ENCODE measurements at regions of chr12 and their contacts with region 1.

Region 1: GRCh38 chr12:89019408-89020120 is 332.7 kb downstream of the DUSP6 start:
- DNase-seq: peak; percentile 81
- H3K4me3 ChIP-seq: peak overlapping the region; percentile 18 to 49 (median 36)
- H3K27ac ChIP-seq: peak overlapping the region; percentile 57
- H3K4me1 ChIP-seq: peaks cover 16% of the 10 kb centered on the region
- H3K27me3 ChIP-seq: no peaks in the 10 kb centered on the region
- CTCF ChIP-seq: peak; percentile 92 to 93

Region 2: DNA sequence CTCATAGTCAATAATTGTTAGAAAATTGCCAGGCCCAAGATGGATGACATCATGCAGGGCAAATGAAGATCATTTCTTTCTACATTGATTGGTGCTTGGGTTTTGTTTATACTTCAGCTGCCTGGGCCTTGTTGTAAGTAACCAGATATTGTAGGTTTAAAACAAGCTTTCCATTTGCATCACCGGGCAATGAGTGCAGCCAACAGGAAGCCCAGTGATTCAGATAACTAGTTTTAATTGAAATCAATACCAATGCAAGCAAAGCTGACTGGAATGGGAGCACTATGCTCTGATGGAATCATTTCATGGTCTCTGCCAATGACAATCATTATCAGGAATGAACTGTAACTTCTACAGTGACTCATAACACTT is 53.4 kb after region 1 on chr12:
- CTCF ChIA-PET with region 1: no interaction called
- dilution Hi-C with region 1: no loop called
- in situ Hi-C with region 1: no loop called
- intact Hi-C with region 1: no loop called
- DNase-seq: no peak
- H3K4me3 ChIP-seq: no peak overlapping the region
- H3K27ac ChIP-seq: no peak overlapping the region
- H3K4me1 ChIP-seq: peaks cover 14% of the 10 kb centered on the region
- H3K27me3 ChIP-seq: no peaks in the 10 kb centered on the region
- CTCF ChIP-seq: no peak

Region 3: GRCh38 chr12:89345830-89346740 is 326.5 kb after region 1 on chr12:
- CTCF ChIA-PET with region 1: no interaction called
- dilution Hi-C with region 1: no loop called
- in situ Hi-C with region 1: no loop called
- intact Hi-C with region 1: loop called (anchors 1 kb)
- DNase-seq: peak; percentile 82
- H3K4me3 ChIP-seq: no peak overlapping the region
- H3K27ac ChIP-seq: peak overlapping the region; percentile 19
- H3K4me1 ChIP-seq: peaks cover 17% of the 10 kb centered on the region
- H3K27me3 ChIP-seq: no peaks in the 10 kb centered on the region
- CTCF ChIP-seq: no peak

Region 4: GRCh38 chr12:89451841-89452251 is 432.3 kb after region 1 on chr12:
- CTCF ChIA-PET with region 1: no interaction called
- dilution Hi-C with region 1: no loop called
- in situ Hi-C with region 1: loop called in 1 of 2 experiments (anchors 10 kb)
- intact Hi-C with region 1: no loop called
- DNase-seq: peak; percentile 74
- H3K4me3 ChIP-seq: no peak overlapping the region
- H3K27ac ChIP-seq: peak overlapping the region; percentile 85
- H3K4me1 ChIP-seq: peaks cover 30% of the 10 kb centered on the region
- H3K27me3 ChIP-seq: no peaks in the 10 kb centered on the region
- CTCF ChIP-seq: no peak

Region 5: GRCh38 chr12:89529738-89530137 is 510.2 kb after region 1 on chr12:
- CTCF ChIA-PET with region 1: interaction called, 8 read pairs
- dilution Hi-C with region 1: no loop called
- in situ Hi-C with region 1: loop called (anchors 5 kb)
- intact Hi-C with region 1: loop called (anchors 1 kb)
- DNase-seq: peak; percentile 45
- H3K4me3 ChIP-seq: no peak overlapping the region
- H3K27ac ChIP-seq: no peak overlapping the region
- H3K4me1 ChIP-seq: no peaks in the 10 kb centered on the region
- H3K27me3 ChIP-seq: no peaks in the 10 kb centered on the region
- CTCF ChIP-seq: peak; percentile 75 to 76

Measured in mammary epithelial cell (primary cell).